Calu3 (cell line): ENCODE measurements at regions of chr3 and their contacts with region 1.

Region 1: DNA sequence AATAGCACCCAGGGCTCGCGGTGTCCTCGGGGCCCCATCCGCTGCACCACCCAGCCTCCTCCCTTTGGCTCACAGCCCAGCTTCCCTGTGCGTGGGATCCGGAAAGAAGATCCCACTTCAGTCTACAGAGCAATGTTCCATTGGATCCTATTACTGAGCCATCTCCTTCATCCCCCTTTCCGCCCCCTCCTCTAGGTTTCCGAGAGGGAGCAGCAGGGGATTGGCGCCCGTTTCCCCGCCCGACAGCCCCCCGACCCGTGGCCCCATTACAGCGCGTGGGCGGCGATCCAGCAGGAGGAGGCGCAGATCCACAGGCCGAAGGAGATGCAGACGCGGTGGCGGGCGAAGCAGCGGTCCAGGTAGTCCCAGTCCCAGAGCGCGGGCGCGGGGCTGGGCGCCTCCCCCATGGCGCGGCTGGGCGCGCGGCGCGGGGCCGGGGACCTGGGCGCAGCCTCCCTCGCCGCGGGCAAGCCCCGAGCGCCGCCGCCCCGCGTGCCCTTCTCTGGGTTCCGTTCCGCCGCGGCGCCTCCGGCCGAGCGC is 340 bp downstream of the TMEM44 start:
- DNase-seq: peak; percentile 27
- H3K4me3 Mint-ChIP-seq: peak overlapping the region; percentile 98
- H3K27ac Mint-ChIP-seq: peak overlapping the region; percentile 95
- H3K4me1 Mint-ChIP-seq: no peaks in the 10 kb centered on the region
- H3K27me3 Mint-ChIP-seq: no peaks in the 10 kb centered on the region
- CTCF ChIP-seq: no peak

Region 2: DNA sequence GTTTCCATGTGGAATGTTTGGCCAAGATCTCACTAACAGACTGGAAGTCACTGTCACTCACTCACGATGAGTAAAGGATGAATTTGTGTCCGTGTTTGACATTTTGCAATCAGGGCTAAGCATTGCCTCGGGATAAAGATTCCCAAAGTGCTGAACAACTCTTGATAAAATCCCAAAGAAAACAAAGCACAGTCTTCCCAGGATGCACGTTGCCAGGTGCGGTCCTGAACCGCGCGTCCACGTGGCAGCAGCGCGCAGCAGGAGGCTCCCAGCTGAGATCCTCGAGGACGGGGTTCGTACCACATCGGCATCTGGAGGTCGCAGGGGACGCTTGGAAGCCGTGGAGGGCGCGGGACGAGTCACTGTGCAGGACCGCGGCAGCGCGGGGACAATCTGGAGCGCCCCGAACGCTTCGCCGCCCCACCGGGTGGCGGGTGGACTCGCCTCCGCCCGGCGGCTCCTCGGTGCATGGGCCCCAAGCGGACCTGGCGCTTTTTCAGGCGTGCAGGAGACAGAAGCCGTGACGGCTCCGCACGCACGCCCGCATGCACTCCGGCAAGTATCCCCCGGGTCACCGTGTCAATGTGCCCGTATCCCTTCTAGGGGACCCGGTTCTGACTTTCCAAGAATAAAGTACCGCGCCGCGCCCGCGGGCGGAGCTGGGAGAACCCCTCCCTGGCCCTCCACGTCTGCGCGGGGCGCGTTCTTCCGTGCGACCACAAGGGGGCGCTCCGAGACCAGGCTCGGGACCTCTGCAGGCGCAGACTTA is 299.5 kb before region 1 on chr3:
- CTCF ChIA-PET with region 1: no interaction called
- intact Hi-C with region 1: loop called (anchors 10 kb)
- DNase-seq: peak; percentile 97
- H3K4me3 Mint-ChIP-seq: peak overlapping the region; percentile 82
- H3K27ac Mint-ChIP-seq: peak overlapping the region; percentile 26
- H3K4me1 Mint-ChIP-seq: peaks cover 22% of the 10 kb centered on the region
- H3K27me3 Mint-ChIP-seq: peaks cover 19% of the 10 kb centered on the region
- CTCF ChIP-seq: peak; percentile 100

Region 3: DNA sequence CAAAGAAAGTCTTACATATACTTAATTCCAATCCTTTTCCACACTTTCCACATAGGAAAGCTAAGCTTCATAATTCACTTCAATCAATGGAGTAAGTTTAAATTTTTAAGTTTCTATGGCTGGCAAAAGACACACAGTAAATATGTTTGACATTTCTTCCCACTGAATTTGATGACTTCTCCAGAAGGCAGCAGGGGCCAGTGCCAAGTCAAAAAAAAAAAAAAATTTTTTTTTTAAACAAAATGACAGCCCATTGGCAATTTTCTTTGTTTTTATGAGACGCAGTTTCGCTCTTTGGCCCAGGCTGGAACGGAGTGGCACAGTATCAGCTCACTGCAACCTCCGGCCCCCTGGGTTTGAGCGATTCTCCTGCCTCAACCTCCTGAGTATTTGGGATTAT is 174.7 kb before region 1 on chr3:
- CTCF ChIA-PET with region 1: no interaction called
- intact Hi-C with region 1: no loop called
- DNase-seq: no peak
- H3K4me3 Mint-ChIP-seq: no peak overlapping the region
- H3K27ac Mint-ChIP-seq: no peak overlapping the region
- H3K4me1 Mint-ChIP-seq: no peaks in the 10 kb centered on the region
- H3K27me3 Mint-ChIP-seq: no peaks in the 10 kb centered on the region
- CTCF ChIP-seq: no peak